ENCODE measurements at regions of chr17 and their contacts with region 1.

Region 1: GRCh38 chr17:42312285-42313130 is 24.2 kb downstream of the STAT5A start:
- DNase-seq: peak in 1 of 2 experiments; percentile 90
- H3K4me3 ChIP-seq: peak overlapping the region in 3 of 4 experiments; percentile 13 to 46 (median 26); a peak in 4 of 8 replicates
- H3K27ac ChIP-seq: no peak overlapping the region
- H3K4me1 ChIP-seq: peaks cover 5 to 20% (median 8%) of the 10 kb centered on the region in 4 experiments; a peak in 6 of 7 replicates
- H3K27me3 ChIP-seq: no peaks in the 10 kb centered on the region
- CTCF ChIP-seq: peak; percentile 67 to 81 (median 74)
- EP300 ChIP-seq: peak in 1 of 2 experiments; percentile 73; a peak in 1 of 3 replicates
- POLR2A ChIP-seq: no peak
- RAD21 ChIP-seq: peak; percentile 72 to 76

Region 2: DNA sequence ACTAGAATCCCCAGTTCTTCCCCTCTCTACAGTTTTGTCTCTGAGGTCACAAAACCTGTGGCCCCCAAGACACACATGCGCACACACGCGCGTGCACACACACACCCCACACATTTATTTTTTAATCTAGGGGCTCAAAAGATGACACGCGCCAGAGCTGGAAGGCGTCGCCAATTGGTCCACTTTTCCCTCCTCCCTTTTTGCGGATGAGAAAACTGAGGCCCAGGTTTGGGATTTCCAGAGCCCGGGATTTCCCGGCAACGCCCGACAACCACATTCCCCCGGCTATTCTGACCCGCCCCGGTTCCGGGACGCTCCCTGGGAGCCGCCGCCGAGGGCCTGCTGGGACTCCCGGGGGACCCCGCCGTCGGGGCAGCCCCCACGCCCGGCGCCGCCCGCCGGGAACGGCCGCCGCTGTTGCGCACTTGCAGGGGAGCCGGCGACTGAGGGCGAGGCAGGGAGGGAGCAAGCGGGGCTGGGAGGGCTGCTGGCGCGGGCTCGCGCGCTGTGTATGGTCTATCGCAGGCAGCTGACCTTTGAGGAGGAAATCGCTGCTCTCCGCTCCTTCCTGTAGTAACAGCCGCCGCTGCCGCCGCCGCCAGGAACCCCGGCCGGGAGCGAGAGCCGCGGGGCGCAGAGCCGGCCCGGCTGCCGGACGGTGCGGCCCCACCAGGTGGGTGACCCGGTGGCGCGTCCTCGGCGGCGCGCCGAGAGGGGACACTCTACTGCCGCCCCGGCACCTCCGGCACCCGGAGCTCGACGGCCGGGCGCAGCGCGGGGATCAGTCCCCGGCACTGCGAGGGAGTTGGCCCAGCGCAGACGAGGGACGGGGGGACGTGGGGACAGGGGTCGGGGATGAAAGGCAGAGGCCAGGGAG is 24.3 kb before region 1 on chr17 and contains the start of gene STAT5A:
- CTCF ChIA-PET with region 1: interaction called, 6 read pairs
- POLR2A ChIA-PET with region 1: interaction called, 33 read pairs
- DNase-seq: peak in 1 of 2 experiments; percentile 84
- H3K4me3 ChIP-seq: peak within 1 kb of the TSS; percentile 29 to 65 (median 34); a peak in 6 of 8 replicates
- H3K27ac ChIP-seq: no peak within 1 kb of the TSS
- H3K4me1 ChIP-seq: peaks cover 0 to 11% (median 9%) of the 10 kb centered on the region in 4 experiments; a peak in 5 of 7 replicates
- H3K27me3 ChIP-seq: peaks cover 7 to 30% (median 25%) of the 10 kb centered on the region in 4 experiments
- CTCF ChIP-seq: no peak
- EP300 ChIP-seq: no peak
- POLR2A ChIP-seq: no peak
- RAD21 ChIP-seq: no peak
- total RNA-seq, gene STAT5A: 5.4 and 6.0 TPM in 2 replicates

Region 3: DNA sequence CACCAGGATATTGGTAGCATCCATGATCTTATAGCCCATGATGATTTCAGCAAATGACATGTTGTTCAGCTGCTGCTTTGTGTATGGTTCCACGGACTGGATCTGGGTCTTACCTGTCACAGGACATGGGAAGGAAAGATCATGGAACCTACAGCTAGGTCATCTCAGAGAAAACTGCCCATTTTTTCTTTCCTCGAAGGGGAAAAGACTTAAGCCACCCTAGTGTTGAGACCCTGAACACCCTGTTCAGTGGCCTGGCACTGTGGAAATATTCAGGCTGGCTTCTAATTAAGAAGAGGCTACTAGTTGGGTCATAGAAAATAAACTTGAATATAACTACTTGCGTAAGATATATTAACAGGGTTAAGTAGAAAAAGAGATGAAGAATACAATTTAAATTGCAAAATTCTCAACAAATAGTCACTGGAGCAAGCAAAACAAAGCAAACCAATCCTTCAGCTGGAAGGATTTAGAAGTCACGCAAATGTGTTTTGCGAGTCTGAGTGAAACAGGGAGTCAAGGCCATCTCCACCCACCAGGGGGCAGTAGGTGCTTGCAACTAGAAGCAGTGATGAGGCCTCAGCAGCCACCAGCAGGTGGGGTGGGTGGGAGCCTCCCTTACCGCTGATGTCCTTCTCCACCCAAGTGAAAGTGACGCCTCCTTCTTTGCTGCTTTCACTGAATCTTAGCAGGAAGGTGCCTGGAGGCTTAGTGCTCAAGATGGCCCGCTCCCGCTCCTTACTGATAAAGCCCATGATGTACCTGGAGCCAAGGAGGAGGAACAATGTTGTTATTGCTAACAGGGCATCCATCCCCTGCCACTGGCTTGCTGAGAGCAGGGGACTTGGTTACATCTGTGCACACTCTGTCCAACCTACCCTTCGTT is 10.1 kb after region 1 on chr17:
- CTCF ChIA-PET with region 1: interaction called, 27 read pairs
- POLR2A ChIA-PET with region 1: interaction called, 23 read pairs
- DNase-seq: peak; percentile 92 to 97
- H3K4me3 ChIP-seq: no peak overlapping the region
- H3K27ac ChIP-seq: no peak overlapping the region
- H3K4me1 ChIP-seq: peaks cover 0 to 6% (median 2%) of the 10 kb centered on the region in 4 experiments; a peak in 3 of 7 replicates
- H3K27me3 ChIP-seq: no peaks in the 10 kb centered on the region
- CTCF ChIP-seq: peak; percentile 100
- EP300 ChIP-seq: no peak
- POLR2A ChIP-seq: no peak
- RAD21 ChIP-seq: peak; percentile 99 to 100

Region 4: DNA sequence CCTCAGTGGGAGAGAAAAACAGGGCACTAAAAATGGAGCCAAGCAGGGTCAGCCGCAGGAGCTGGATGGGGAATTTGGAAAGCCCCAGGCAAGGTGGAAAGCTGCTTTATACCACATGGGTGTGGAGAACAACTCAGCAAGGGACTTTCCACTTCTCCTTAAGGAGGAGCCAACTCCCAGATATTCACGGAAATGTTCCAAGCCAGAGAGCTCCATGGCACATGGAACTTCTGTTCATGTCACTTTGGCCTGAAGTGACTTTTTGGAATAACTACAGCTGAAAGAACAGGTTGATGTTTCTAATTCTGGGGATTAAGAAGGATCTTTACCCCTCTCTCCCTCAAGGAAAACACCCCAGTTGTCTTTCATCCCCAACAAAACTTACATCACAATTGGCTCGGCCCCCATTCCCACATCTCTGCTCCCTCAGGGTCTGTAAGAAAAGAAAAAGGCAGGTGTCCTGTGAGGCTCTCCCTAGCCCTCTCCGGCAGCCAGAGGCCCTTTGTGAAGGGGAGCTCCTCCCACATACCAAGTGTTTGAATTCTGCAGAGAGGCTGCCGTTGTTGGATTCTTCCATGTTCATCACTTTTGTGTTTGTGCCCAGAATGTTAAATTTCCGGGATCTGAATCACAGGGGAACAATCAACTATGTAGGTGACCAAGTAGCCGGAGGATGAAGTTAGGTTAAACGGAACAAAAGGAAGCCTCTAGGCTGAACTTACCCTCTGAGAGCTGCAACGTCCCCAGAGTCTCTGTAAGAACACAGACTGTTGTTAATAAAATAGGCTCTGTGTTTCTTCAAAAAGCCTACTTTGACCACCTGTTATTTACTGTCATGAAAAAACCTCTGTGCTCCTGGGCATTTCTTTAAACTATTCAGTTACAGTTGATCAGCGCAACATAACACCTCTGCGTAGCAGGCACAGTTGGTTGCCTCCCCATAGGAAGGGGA is 16.8 kb after region 1 on chr17:
- CTCF ChIA-PET with region 1: interaction called, 13 read pairs
- POLR2A ChIA-PET with region 1: interaction called, 23 read pairs
- DNase-seq: peak; percentile 74 to 89
- H3K4me3 ChIP-seq: peak overlapping the region in 2 of 4 experiments; percentile 17 to 39; a peak in 4 of 8 replicates
- H3K27ac ChIP-seq: peak overlapping the region; percentile 86
- H3K4me1 ChIP-seq: peaks cover 0 to 20% (median 9%) of the 10 kb centered on the region in 4 experiments; a peak in 5 of 7 replicates
- H3K27me3 ChIP-seq: no peaks in the 10 kb centered on the region
- CTCF ChIP-seq: no peak
- EP300 ChIP-seq: peak in 1 of 2 experiments; percentile 63; a peak in 1 of 3 replicates
- POLR2A ChIP-seq: peak in 1 of 2 experiments; percentile 73; a peak in 2 of 3 replicates
- RAD21 ChIP-seq: no peak